Natural killer cell (primary cell): ENCODE measurements at regions of chr19 and their contacts with region 1.

Region 1: GRCh38 chr19:54247106-54247930 is 4.7 kb upstream of the LILRA6 start:
- DNase-seq: no peak
- ATAC-seq: no peak
- H3K4me3 ChIP-seq: no peak overlapping the region
- H3K4me3 Mint-ChIP-seq: peak overlapping the region; percentile 45
- H3K27ac ChIP-seq: peak overlapping the region; percentile 25
- H3K27ac Mint-ChIP-seq: peak overlapping the region; percentile 7 to 58
- H3K4me1 ChIP-seq: peaks cover 17% of the 10 kb centered on the region
- H3K4me1 Mint-ChIP-seq: peaks cover 11 to 12% of the 10 kb centered on the region in 2 donors
- H3K27me3 ChIP-seq: no peaks in the 10 kb centered on the region
- H3K27me3 Mint-ChIP-seq: peaks cover 5 to 6% of the 10 kb centered on the region in 2 donors
- CTCF ChIP-seq: no peak

Region 2: GRCh38 chr19:54218960-54219661 is 28.2 kb before region 1 on chr19:
- intact Hi-C with region 1: loop called (anchors 2 kb)
- DNase-seq: no peak
- ATAC-seq: no peak
- H3K4me3 ChIP-seq: no peak overlapping the region
- H3K4me3 Mint-ChIP-seq: no peak overlapping the region
- H3K27ac ChIP-seq: no peak overlapping the region
- H3K27ac Mint-ChIP-seq: no peak overlapping the region
- H3K4me1 ChIP-seq: peaks cover 16% of the 10 kb centered on the region
- H3K4me1 Mint-ChIP-seq: peaks cover 0 to 7% of the 10 kb centered on the region in 2 donors
- H3K27me3 ChIP-seq: no peaks in the 10 kb centered on the region
- H3K27me3 Mint-ChIP-seq: peaks cover 11 to 12% of the 10 kb centered on the region in 2 donors
- CTCF ChIP-seq: no peak

Region 3: GRCh38 chr19:54502518-54503048 is 255.3 kb after region 1 on chr19 and contains the start of gene LAIR2:
- intact Hi-C with region 1: no loop called
- DNase-seq: peak; percentile 41 to 53
- ATAC-seq: peak; percentile 64 to 85 (median 74)
- H3K4me3 ChIP-seq: peak within 1 kb of the TSS; percentile 14
- H3K4me3 Mint-ChIP-seq: peak within 1 kb of the TSS; percentile 80
- H3K27ac ChIP-seq: peak within 1 kb of the TSS; percentile 19
- H3K27ac Mint-ChIP-seq: peak within 1 kb of the TSS; percentile 79
- H3K4me1 ChIP-seq: peaks cover 49% of the 10 kb centered on the region
- H3K4me1 Mint-ChIP-seq: peaks cover 48 to 59% of the 10 kb centered on the region in 2 donors
- H3K27me3 ChIP-seq: peaks cover 6% of the 10 kb centered on the region
- H3K27me3 Mint-ChIP-seq: peaks cover 0 to 8% of the 10 kb centered on the region in 2 donors
- CTCF ChIP-seq: no peak
- total RNA-seq, gene LAIR2: 44.1 to 67.7 (median 53.3) TPM